Naive thymus-derived CD4-positive, alpha-beta T cell (primary cell): ENCODE measurements at regions of chr20 and their contacts with region 1.

Region 1: DNA sequence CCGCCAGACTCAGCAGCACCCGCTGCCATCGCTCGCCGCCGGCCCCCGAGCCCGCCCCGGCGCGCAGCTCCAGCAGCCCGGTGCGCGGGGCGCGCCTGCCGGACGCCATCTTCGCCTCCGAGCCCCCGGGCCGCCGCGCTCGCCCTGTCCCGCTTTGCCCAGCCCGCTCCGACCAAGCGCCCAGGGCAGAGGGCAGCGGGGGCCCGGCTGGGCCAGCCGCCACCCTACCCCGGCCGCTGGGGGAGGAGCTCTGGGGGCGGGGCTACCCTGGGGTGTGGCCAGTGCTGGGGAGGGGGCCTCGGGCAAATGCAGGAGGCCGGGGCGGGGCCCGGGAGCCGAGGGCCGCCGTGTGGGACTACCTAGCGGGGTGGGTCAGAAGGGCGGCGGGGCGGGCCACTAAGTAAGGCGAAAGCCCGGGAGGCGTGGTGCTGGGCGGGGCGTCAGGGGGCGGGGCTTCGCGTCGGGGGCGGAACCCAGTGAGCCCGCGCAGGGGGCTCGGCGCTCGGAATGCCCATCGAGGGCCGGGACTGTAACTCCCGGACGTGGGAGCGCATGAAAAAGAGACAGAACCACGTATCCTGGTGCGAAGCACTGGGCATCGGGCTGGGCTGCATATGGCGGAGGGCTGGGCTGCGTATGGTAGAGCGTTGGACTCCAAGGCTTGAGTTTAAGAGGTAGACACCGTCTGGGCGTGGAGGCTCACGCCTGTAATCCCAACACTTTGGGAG is at the start of gene SNTA1:
- DNase-seq: peak; percentile 51 to 90 (median 70)
- ATAC-seq: peak; percentile 84
- H3K4me3 ChIP-seq: peak within 1 kb of the TSS; percentile 96
- H3K4me3 Mint-ChIP-seq: peak within 1 kb of the TSS; percentile 82 to 96 (median 92)
- H3K27ac ChIP-seq: peak within 1 kb of the TSS; percentile 62
- H3K27ac Mint-ChIP-seq: peak within 1 kb of the TSS; percentile 69 to 95 (median 90)
- H3K4me1 ChIP-seq: peaks cover 10 to 11% of the 10 kb centered on the region in 2 donors
- H3K4me1 Mint-ChIP-seq: peaks cover 16 to 32% (median 22%) of the 10 kb centered on the region in 7 donors
- H3K27me3 ChIP-seq: no peaks in the 10 kb centered on the region
- H3K27me3 Mint-ChIP-seq: peaks cover 0 to 19% (median 0%) of the 10 kb centered on the region in 5 donors
- total RNA-seq, gene SNTA1: 2.0 to 3.2 (median 2.9) TPM

Region 2: GRCh38 chr20:33097001-33097400 is 346.7 kb before region 1 on chr20:
- CTCF ChIA-PET with region 1: no interaction called
- POLR2A ChIA-PET with region 1: no interaction called
- intact Hi-C with region 1: loop called in 1 of 2 experiments (anchors 10 kb)
- DNase-seq: no peak
- ATAC-seq: no peak
- H3K4me3 ChIP-seq: no peak overlapping the region
- H3K4me3 Mint-ChIP-seq: no peak overlapping the region
- H3K27ac ChIP-seq: no peak overlapping the region
- H3K27ac Mint-ChIP-seq: no peak overlapping the region
- H3K4me1 ChIP-seq: peaks cover 0 to 8% of the 10 kb centered on the region in 2 donors
- H3K4me1 Mint-ChIP-seq: peaks cover 0 to 12% (median 5%) of the 10 kb centered on the region in 7 donors
- H3K27me3 ChIP-seq: no peaks in the 10 kb centered on the region
- H3K27me3 Mint-ChIP-seq: peaks cover 0 to 4% (median 0%) of the 10 kb centered on the region in 5 donors

Region 3: DNA sequence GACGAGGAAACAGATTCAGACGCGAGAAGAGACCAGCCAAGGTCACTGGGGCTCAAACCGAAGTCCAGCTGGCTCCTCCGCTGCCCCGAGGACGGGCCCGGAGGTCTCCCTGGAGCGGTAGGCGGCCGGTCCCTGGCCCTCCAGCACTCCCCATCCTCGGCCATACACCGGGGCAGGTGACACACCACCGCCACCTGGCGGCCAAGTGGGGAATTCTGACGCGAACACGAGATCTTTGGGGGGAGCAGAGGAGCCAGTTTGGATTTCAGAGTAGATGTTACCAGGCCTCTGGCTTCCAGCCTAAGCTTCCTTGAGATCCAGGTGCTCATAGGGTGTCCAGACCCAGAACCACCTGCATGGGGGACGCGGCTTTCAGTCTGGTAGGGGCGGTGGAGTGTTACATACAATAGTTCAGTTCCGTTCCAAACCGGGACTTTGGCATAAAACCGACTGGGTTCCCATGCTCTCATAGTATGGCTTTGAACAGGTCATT is 144.5 kb before region 1 on chr20:
- CTCF ChIA-PET with region 1: no interaction called
- POLR2A ChIA-PET with region 1: no interaction called
- intact Hi-C with region 1: loop called in 1 of 2 experiments (anchors 1 kb)
- DNase-seq: peak; percentile 48 to 81 (median 70)
- ATAC-seq: peak; percentile 87
- H3K4me3 ChIP-seq: no peak overlapping the region
- H3K4me3 Mint-ChIP-seq: peak overlapping the region in 1 of 10 donors; percentile 8
- H3K27ac ChIP-seq: no peak overlapping the region
- H3K27ac Mint-ChIP-seq: no peak overlapping the region
- H3K4me1 ChIP-seq: peaks cover 0 to 6% of the 10 kb centered on the region in 2 donors
- H3K4me1 Mint-ChIP-seq: peaks cover 0 to 3% (median 0%) of the 10 kb centered on the region in 7 donors
- H3K27me3 ChIP-seq: no peaks in the 10 kb centered on the region
- H3K27me3 Mint-ChIP-seq: peaks cover 4 to 19% (median 12%) of the 10 kb centered on the region in 5 donors

Region 4: DNA sequence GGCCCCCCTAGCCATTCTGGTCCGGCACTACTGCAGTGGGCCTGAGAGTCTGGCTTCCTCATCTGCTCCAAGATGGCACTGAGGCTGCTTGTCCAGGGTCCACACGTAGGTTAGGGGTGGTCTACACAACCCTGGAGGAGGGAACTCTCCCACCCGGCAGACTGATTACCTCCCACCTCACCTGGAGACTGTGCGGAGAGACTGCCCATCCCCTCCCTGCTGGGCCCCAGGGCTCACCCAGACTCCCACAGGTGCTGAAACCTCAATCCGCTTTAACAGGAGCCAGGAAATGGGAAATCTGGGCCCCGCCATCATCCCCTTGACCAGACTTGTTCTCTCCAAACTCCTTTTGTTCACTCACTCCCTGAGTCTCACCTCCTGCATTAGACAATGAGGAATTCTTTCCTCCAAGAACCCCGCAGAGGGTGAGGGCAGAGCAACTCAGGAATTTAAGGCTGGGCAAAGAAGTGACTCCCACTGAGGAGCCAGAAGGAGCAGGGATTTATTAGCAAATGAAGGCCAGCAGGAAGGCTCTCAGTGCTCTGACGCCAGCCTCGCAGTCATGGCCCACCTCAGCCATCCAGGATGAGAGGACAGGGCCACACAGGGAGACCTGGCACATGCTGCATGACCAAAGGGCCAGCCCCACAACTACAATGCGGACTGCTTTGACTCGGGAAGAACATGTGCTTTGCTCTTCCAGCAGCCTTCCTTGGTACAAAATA is 95.4 kb before region 1 on chr20:
- CTCF ChIA-PET with region 1: no interaction called
- POLR2A ChIA-PET with region 1: no interaction called
- intact Hi-C with region 1: no loop called
- DNase-seq: no peak
- ATAC-seq: no peak
- H3K4me3 ChIP-seq: no peak overlapping the region
- H3K4me3 Mint-ChIP-seq: no peak overlapping the region
- H3K27ac ChIP-seq: no peak overlapping the region
- H3K27ac Mint-ChIP-seq: peak overlapping the region in 1 of 9 donors; percentile 55
- H3K4me1 ChIP-seq: no peaks in the 10 kb centered on the region
- H3K4me1 Mint-ChIP-seq: peaks cover 0 to 6% (median 5%) of the 10 kb centered on the region in 7 donors
- H3K27me3 ChIP-seq: no peaks in the 10 kb centered on the region
- H3K27me3 Mint-ChIP-seq: no peaks in the 10 kb centered on the region

Region 5: DNA sequence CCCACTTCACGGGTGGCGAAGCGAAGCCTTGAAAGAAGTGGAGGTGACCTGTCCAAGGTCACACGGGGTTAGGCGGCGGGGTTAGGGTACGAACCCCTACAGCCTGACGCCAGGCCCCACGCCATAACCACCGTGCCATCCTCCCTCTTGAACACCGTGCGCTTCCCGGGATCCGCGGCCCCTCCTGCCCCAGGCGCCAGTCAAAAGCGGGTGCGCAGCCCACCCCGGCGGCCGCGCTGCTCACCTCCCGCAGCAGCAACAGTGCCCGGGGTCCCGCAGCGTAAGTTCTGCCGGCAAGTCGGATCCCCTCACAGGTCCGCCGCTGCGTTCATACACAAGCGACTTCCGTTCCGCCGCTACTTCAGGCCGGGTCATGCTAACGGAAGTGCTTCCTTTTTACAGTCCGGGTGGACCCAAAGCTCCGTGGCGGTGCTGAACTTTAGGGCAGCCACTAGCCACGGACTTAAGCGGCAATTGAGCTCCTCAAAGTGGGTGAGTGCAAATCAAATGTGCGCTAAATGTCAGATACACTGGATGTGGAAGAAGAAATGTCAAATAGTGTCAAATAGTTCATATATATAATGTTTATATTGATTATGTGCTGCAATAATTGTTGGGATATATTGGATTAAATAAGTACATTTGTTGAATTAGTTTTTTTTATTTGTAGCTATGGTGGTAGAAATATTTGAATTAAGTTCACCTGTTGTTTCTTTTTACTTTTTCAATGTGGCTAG is 42.3 kb before region 1 on chr20 and contains the start of gene CDK5RAP1:
- CTCF ChIA-PET with region 1: interaction called, 10 read pairs
- POLR2A ChIA-PET with region 1: interaction called, 6 read pairs
- intact Hi-C with region 1: loop called (anchors 1 kb)
- DNase-seq: peak; percentile 62 to 84 (median 82)
- ATAC-seq: peak; percentile 98
- H3K4me3 ChIP-seq: peak within 1 kb of the TSS; percentile 93
- H3K4me3 Mint-ChIP-seq: peak within 1 kb of the TSS; percentile 92 to 99 (median 98)
- H3K27ac ChIP-seq: peak within 1 kb of the TSS; percentile 80
- H3K27ac Mint-ChIP-seq: peak within 1 kb of the TSS; percentile 89 to 94 (median 92)
- H3K4me1 ChIP-seq: peaks cover 23 to 33% of the 10 kb centered on the region in 2 donors
- H3K4me1 Mint-ChIP-seq: peaks cover 36 to 71% (median 64%) of the 10 kb centered on the region in 7 donors
- H3K27me3 ChIP-seq: no peaks in the 10 kb centered on the region
- H3K27me3 Mint-ChIP-seq: no peaks in the 10 kb centered on the region
- total RNA-seq, gene CDK5RAP1: 33.6 to 51.8 (median 49.4) TPM

Region 6: DNA sequence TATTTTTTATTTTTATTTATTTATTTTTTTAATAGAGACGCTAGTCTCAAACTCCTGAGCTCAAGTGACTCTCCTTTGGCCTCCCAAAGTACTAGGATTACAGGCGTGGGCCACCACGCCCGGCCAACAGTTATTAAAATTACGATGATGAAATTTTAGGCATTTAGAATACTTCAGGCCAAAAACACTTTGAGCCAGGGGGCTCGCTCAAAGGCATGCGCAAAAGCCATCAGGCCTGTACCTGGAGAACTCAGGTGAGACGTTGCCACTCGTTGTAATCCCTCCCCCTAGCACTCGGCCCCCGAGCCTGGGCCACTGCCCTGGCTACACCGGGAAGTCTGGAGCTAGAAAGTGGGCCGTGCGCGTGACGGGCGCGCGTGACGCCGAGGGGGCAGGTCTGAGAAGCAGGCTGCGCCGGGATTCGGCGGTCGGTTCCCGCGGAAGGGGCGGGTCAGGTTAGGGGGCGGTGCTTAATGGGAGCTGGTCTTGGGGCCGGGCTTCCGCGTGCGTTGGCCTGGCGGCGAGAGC is 45.9 kb after region 1 on chr20:
- CTCF ChIA-PET with region 1: no interaction called
- POLR2A ChIA-PET with region 1: interaction called, 11 read pairs
- intact Hi-C with region 1: loop called (anchors 1 to 2 kb)
- DNase-seq: peak; percentile 97 to 99 (median 99)
- ATAC-seq: peak; percentile 97
- H3K4me3 ChIP-seq: peak overlapping the region; percentile 75
- H3K4me3 Mint-ChIP-seq: peak overlapping the region; percentile 84 to 95 (median 88)
- H3K27ac ChIP-seq: peak overlapping the region; percentile 94
- H3K27ac Mint-ChIP-seq: peak overlapping the region; percentile 86 to 96 (median 90)
- H3K4me1 ChIP-seq: peaks cover 4 to 9% of the 10 kb centered on the region in 2 donors
- H3K4me1 Mint-ChIP-seq: peaks cover 0 to 30% (median 13%) of the 10 kb centered on the region in 7 donors
- H3K27me3 ChIP-seq: no peaks in the 10 kb centered on the region
- H3K27me3 Mint-ChIP-seq: no peaks in the 10 kb centered on the region

Region 7: GRCh38 chr20:33554914-33555420 is 111.3 kb after region 1 on chr20:
- CTCF ChIA-PET with region 1: interaction called, 5 read pairs
- POLR2A ChIA-PET with region 1: no interaction called
- intact Hi-C with region 1: loop called (anchors 1 to 5 kb)
- DNase-seq: peak in 7 of 9 donors; percentile 72 to 92 (median 88)
- ATAC-seq: peak; percentile 98
- H3K4me3 ChIP-seq: peak overlapping the region; percentile 3
- H3K4me3 Mint-ChIP-seq: peak overlapping the region; percentile 51 to 83 (median 75)
- H3K27ac ChIP-seq: peak overlapping the region; percentile 81
- H3K27ac Mint-ChIP-seq: peak overlapping the region; percentile 90 to 98 (median 95)
- H3K4me1 ChIP-seq: peaks cover 16% of the 10 kb centered on the region in 2 donors
- H3K4me1 Mint-ChIP-seq: peaks cover 15 to 49% (median 39%) of the 10 kb centered on the region in 7 donors
- H3K27me3 ChIP-seq: no peaks in the 10 kb centered on the region
- H3K27me3 Mint-ChIP-seq: no peaks in the 10 kb centered on the region